Natural killer cell (primary cell): ENCODE measurements at regions of chr10 and their contacts with region 1.

Region 1: DNA sequence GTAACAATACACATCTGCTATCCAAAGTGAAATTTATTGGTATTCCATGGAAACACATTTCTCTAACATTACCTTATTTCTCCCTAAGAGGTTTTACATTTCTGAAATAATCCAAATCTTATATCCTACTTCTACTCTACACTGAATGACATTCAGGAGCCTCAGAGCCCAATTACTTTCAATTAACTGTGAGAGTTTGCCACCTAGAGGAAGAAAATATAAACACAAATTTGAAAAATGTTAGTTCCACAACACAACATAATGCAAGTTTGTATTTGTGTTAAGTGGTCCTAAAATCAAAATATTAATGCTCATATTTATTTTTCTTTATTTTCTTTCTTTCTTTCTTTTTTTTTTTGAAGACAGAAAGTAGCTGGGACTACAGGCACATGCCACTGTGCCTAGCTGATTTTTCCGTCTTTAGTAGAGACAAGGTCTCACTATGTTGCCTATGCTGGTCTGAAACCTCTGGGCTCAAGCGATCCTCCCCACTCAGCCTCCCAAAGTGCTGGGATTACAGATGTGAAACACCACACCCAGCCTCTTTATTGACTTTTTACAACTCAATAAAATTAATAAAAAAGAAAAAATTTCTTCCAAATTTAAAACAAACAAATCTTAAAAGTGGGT is 46.0 kb downstream of the ATAD1 start:
- DNase-seq: peak in 1 of 2 donors; percentile 34
- ATAC-seq: no peak
- H3K4me3 ChIP-seq: no peak overlapping the region
- H3K4me3 Mint-ChIP-seq: no peak overlapping the region
- H3K27ac ChIP-seq: no peak overlapping the region
- H3K27ac Mint-ChIP-seq: no peak overlapping the region
- H3K4me1 ChIP-seq: no peaks in the 10 kb centered on the region
- H3K4me1 Mint-ChIP-seq: peaks cover 0 to 5% of the 10 kb centered on the region in 2 donors
- H3K27me3 ChIP-seq: no peaks in the 10 kb centered on the region
- H3K27me3 Mint-ChIP-seq: no peaks in the 10 kb centered on the region
- CTCF ChIP-seq: peak; percentile 52

Region 2: DNA sequence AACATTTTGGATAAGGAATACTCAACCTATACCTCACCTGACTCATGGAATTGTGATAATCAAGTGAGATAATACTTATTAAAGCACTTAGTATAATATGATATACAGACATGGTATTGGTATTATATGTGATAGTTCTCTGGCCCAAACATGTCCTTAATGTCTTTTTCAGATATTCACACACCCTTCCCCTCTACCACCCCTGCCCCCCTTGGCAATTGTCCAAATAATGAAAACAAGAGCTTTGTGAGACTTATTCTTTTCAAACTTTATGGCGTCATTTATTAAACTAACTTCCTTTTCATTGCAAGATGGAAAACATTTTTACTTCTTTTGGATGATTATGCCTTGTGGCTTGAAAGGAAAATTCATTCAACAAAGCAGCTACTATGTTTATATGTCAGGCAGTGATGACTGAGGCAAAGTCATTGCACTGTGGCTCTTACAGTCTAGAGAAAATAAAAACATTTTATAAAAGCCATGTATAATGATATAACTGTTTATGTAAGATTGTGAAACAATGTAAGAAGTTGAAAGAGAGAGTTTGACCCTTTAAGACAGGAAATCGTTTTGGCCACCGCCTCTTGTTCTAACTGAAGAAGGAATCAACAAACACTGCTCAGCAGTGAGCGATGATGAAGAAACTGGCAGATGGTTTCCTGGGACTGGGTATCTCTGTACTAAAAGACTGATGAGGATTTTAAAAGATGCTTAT is 239.9 kb before region 1 on chr10:
- intact Hi-C with region 1: loop called (anchors 2 kb)
- DNase-seq: no peak
- ATAC-seq: no peak
- H3K4me3 ChIP-seq: no peak overlapping the region
- H3K4me3 Mint-ChIP-seq: no peak overlapping the region
- H3K27ac ChIP-seq: no peak overlapping the region
- H3K27ac Mint-ChIP-seq: no peak overlapping the region
- H3K4me1 ChIP-seq: no peaks in the 10 kb centered on the region
- H3K4me1 Mint-ChIP-seq: peaks cover 9 to 23% of the 10 kb centered on the region in 2 donors
- H3K27me3 ChIP-seq: no peaks in the 10 kb centered on the region
- H3K27me3 Mint-ChIP-seq: no peaks in the 10 kb centered on the region
- CTCF ChIP-seq: no peak

Region 3: GRCh38 chr10:87659571-87660483 is 112.2 kb before region 1 on chr10 and contains the start of gene PAPSS2:
- intact Hi-C with region 1: loop called (anchors 10 kb)
- DNase-seq: peak in 1 of 2 donors; percentile 23
- ATAC-seq: peak; percentile 36 to 60 (median 51)
- H3K4me3 ChIP-seq: peak within 1 kb of the TSS; percentile 23
- H3K4me3 Mint-ChIP-seq: peak within 1 kb of the TSS; percentile 81
- H3K27ac ChIP-seq: no peak within 1 kb of the TSS
- H3K27ac Mint-ChIP-seq: peak within 1 kb of the TSS in 1 of 2 donors; percentile 58
- H3K4me1 ChIP-seq: peaks cover 12% of the 10 kb centered on the region
- H3K4me1 Mint-ChIP-seq: peaks cover 13 to 23% of the 10 kb centered on the region in 2 donors
- H3K27me3 ChIP-seq: peaks cover 15% of the 10 kb centered on the region
- H3K27me3 Mint-ChIP-seq: peaks cover 24 to 53% of the 10 kb centered on the region in 2 donors
- CTCF ChIP-seq: no peak
- total RNA-seq, gene PAPSS2: 0.13 to 1.1 TPM in 2 of 3 donors, not detected in the other

Region 4: GRCh38 chr10:88243836-88244730 is 472.1 kb after region 1 on chr10:
- intact Hi-C with region 1: no loop called
- DNase-seq: no peak
- ATAC-seq: no peak
- H3K4me3 ChIP-seq: no peak overlapping the region
- H3K4me3 Mint-ChIP-seq: no peak overlapping the region
- H3K27ac ChIP-seq: no peak overlapping the region
- H3K27ac Mint-ChIP-seq: no peak overlapping the region
- H3K4me1 ChIP-seq: peaks cover 6% of the 10 kb centered on the region
- H3K4me1 Mint-ChIP-seq: peaks cover 11 to 12% of the 10 kb centered on the region in 2 donors
- H3K27me3 ChIP-seq: no peaks in the 10 kb centered on the region
- H3K27me3 Mint-ChIP-seq: peaks cover 0 to 11% of the 10 kb centered on the region in 2 donors
- CTCF ChIP-seq: no peak